ENCODE measurements at regions of chr2 and their contacts with region 1.

Region 1: DNA sequence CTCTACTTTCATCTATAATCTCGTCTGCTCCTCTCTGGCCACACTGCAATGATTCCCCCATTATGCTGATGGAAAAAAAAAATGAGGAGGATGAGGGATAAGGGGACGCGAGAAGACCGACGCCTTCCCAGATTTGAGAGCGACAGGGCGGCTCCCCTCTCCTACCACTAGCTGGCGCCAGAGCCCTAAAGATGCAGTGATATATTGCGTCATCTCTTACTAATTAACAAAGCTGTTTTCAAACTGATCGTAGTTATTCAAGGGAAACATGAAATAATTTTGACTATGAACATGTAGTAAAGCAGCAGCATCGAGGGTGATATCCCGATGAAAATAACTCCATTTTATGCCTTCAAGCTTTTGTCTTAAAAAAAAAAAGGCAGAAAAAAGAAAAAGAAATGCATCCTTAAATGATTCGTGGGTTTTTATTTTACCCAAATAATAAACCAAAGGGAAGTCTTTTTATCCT is 48.0 kb upstream of the HNRNPA3 start:
- ATAC-seq: peak; percentile 66 to 93 (median 90)
- H3K4me3 ChIP-seq: peak overlapping the region; percentile 18 to 31 (median 25)
- H3K27ac ChIP-seq: peak overlapping the region; percentile 77 to 91
- H3K4me1 ChIP-seq: peaks cover 24 to 47% of the 10 kb centered on the region in 2 donors

Region 2: DNA sequence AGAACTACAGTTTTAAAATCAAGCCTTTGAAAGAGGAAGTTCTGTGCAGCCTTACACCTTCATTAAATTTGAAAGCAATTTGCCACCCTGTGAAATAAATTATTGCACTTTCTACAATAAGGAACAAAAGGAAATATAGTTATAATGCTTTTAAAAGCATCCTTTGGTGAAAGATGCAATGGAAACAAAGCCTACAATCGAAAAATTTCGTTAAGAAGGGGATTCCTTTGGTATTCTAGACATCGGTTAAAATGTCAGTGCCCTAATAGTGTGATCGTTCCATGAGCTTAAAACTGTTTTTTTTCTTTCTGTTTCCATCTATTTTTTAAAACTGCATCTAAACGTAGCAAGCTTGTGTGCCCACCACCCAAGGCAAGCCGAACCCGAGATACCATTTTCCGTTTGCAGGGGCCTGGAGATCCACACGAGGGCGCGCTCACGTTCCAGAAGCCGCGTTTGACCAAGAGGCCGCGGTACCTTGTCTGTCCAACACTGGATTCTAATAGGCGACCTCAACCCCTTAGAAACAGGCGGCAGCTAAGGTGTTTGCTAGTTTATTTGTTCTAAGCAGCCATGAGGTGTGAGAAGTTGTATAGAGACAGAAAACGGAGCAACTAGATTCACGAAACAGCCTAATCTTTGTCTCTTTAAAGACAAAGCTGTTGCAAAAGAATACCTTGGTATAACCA is 1053.5 kb before region 1 on chr2:
- in situ Hi-C with region 1: loop called in 1 of 9 experiments (anchors 25 kb)
- ATAC-seq: peak; percentile 0 to 55 (median 40)
- H3K4me3 ChIP-seq: no peak overlapping the region
- H3K27ac ChIP-seq: no peak overlapping the region
- H3K4me1 ChIP-seq: peaks cover 0 to 16% of the 10 kb centered on the region in 2 donors

Region 3: DNA sequence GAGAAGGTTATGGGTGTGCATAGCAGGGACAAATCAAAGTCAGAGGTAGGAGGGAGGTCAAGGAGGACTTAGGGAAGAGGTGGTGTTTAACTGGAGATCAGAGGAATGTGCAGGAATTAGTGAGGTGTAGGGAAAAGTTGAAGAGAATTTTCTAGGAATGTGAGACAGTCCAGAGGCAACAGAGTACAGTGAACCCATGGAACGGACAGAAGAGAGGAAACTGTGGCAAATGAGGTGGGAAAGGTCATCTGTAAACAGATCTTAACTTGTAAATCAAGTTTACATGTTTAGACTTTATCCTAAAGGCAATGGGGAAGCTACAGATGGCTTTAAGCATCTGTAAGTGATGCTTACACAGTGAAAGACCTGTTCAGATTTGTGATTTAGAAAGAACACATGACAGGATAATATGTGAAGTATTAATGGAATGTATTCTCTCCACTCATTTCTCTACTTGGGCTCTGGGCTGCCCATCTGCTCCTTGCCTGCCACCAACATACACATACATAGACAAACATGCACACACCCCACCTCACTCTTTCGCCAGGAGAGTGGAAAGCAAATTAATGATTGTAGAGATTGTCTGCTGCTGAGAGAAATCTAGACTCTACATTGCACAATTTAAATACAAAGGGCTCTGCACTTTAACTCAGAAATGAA is 160.8 kb after region 1 on chr2:
- in situ Hi-C with region 1: loop called in 8 of 9 experiments (anchors 10 to 25 kb)
- ATAC-seq: peak in 4 of 8 experiments; percentile 36 to 82 (median 41)
- H3K4me3 ChIP-seq: no peak overlapping the region
- H3K27ac ChIP-seq: no peak overlapping the region
- H3K4me1 ChIP-seq: no peaks in the 10 kb centered on the region

Region 4: GRCh38 chr2:177724398-177725287 is 560.0 kb after region 1 on chr2:
- in situ Hi-C with region 1: loop called in 2 of 9 experiments (anchors 25 kb)
- ATAC-seq: peak; percentile 51 to 82 (median 64)
- H3K4me3 ChIP-seq: no peak overlapping the region
- H3K27ac ChIP-seq: peak overlapping the region in 1 of 2 donors; percentile 65
- H3K4me1 ChIP-seq: peaks cover 38 to 97% of the 10 kb centered on the region in 2 donors

Region 5: DNA sequence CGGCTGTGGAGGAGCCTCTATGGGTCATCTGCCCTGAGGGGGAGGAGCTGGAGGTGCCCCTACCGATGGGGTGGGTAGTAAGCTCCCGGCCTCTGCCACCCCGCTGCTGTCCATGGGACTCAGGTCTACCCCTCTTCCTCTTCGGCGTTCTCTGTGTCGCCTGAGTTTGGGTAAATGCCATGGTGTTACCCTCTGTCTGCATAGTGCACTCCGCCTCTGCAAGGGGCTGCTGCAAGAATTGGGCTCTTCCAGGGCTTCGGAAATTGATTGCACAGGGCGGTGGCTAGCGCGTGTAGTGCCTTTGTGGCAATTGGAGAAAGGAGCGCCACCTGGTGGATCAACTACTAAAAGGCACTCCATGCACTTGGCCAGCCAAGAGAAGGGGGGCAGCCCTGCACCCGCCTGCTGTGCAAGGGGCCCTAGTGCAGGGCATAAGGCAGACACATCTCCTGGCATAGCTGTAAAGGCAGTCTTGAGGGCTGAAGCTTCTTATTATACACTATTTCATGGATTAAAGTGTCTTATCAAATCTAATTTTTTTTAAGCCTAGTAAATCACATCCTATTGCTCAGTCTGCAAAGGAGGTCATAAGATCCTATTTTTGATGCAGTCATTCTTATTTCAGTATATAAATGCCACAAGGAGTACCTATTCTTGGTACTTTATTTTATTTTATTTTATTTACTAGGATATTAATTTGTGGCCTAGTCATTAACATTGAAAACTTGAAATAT is 599.1 kb after region 1 on chr2:
- in situ Hi-C with region 1: loop called in 3 of 9 experiments (anchors 25 kb)
- ATAC-seq: peak; percentile 86 to 98 (median 90)
- H3K4me3 ChIP-seq: no peak overlapping the region
- H3K27ac ChIP-seq: no peak overlapping the region
- H3K4me1 ChIP-seq: peaks cover 5 to 17% of the 10 kb centered on the region in 2 donors